Activated CD8-positive, alpha-beta T cell treated with anti-CD3 and anti-CD28 coated beads for 36 hours (primary cell): ENCODE measurements at regions of chr18 and their contacts with region 1.

Region 1: DNA sequence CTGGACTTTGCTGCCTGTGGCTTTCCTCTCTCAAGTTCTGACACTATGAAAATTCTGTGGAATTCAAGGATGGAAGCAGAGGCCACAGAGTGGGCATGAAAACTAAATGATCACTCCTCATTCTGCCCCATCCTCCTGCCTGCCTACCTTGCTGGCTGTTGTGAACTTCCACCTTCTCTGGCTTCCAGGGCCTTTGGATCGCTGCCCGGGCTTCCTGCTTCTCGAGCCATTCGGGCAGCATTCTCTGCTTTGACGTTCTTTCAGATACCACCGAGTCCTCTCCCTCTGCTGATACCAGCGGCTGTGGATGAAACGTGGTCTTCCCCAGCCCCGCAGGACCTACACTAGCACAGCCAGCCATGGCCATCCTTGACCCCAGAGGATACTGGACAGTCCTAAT is 327.7 kb upstream of the SLC14A2 start:
- DNase-seq: no peak
- ATAC-seq: no peak
- H3K4me3 Mint-ChIP-seq: no peak overlapping the region
- H3K27ac Mint-ChIP-seq: no peak overlapping the region
- H3K4me1 Mint-ChIP-seq: no peaks in the 10 kb centered on the region
- H3K27me3 Mint-ChIP-seq: no peaks in the 10 kb centered on the region
- CTCF ChIP-seq: no peak

Region 2: DNA sequence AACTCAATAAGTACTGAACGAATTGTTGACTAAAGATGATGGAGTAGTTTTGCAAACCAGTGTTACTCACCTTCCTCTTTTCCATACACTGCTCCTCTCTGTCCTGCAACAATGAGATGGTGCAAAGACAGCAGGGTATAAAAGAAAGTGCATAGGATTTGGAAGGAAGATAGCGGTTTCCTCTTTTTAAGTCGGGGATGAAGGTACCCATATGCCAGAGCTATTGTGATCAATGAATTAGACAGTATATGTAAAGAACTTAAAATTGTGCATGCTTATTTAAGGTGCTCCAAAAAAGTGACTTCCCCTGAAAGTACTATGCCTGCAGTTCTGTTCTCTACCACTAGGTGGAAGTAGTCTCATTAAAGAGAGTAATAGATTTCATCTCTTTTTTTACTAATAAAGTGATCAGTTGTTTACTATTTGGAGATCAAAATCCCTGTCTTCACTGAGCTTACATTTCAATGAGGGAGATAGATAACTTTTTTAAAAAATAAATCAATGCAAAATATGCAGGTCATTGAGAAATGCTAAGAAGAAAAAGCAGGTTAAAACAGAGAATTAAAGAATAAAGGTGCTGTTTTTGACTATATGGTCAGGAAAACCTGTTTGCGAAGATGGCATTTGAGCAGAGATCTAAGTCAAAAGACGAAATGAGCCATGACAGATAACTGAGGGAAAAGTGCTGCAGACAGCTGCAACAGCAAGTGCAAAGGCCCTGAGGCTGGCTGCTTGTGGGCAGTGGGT is 12.0 kb before region 1 on chr18:
- CTCF ChIA-PET with region 1: interaction called, 11 read pairs
- POLR2A ChIA-PET with region 1: no interaction called
- intact Hi-C with region 1: no loop called
- DNase-seq: no peak
- ATAC-seq: no peak
- H3K4me3 Mint-ChIP-seq: no peak overlapping the region
- H3K27ac Mint-ChIP-seq: no peak overlapping the region
- H3K4me1 Mint-ChIP-seq: no peaks in the 10 kb centered on the region
- H3K27me3 Mint-ChIP-seq: no peaks in the 10 kb centered on the region
- CTCF ChIP-seq: peak; percentile 95